Ascending aorta (tissue), 2 donors: ENCODE measurements at regions of chr4 and their contacts with region 1.

Region 1: DNA sequence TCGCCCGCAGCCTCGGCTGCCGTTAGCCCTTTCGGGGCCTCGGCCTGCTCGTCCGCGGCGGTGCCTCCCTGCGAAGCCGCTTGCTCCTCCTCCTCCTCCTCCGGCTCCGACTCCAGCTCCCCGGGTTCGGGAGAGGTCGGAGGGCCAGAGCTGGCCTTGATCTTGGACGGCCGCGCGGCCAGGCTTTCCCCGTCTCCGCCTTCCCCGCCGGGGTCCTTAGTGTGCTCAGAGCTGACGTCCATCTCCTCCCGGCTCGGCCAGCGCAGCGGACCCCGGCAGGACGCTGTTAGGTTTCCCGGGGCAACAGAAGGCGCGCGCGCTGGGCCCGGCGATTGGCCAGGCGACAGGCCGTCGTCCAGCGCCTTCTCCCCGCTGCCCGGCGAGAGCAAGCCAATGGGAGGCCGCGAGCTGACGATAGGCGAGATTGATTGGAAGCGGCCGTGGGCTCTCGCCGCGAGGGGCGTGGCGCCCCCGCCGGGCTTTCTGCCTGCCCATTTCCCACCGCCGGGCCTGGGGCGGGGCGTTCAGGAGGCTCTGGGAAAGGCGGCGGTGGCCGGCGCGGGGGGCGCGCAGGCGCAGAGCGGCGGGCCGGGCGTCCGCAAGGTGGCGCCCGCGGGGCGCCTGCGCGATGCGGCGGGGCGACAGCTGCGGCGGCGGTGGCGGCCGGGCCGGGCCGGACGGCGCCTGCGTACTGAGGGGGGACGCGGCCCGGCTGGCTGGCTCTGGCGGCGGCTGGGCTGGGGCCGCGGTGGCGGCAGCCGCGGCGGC is at the start of gene TADA2B:
- DNase-seq: peak; percentile 91 to 99
- H3K4me3 ChIP-seq: peak within 1 kb of the TSS; percentile 99 to 100
- H3K27ac ChIP-seq: peak within 1 kb of the TSS; percentile 90 to 92
- H3K4me1 ChIP-seq: peaks cover 27% of the 10 kb centered on the region in 2 donors
- H3K27me3 ChIP-seq: no peaks in the 10 kb centered on the region
- CTCF ChIP-seq: peak in 2 of 3 experiments; percentile 5 to 85
- total RNA-seq, gene TADA2B: 37.3 TPM

Region 2: GRCh38 chr4:6574747-6575502 is 468.0 kb before region 1 on chr4 and contains the start of gene MAN2B2:
- intact Hi-C with region 1: loop called (anchors 10 kb)
- DNase-seq: peak; percentile 24 to 94
- H3K4me3 ChIP-seq: peak within 1 kb of the TSS; percentile 75 to 93
- H3K27ac ChIP-seq: peak within 1 kb of the TSS; percentile 68 to 69
- H3K4me1 ChIP-seq: peaks cover 7 to 13% of the 10 kb centered on the region in 2 donors
- H3K27me3 ChIP-seq: no peaks in the 10 kb centered on the region
- CTCF ChIP-seq: no peak
- total RNA-seq, gene MAN2B2: 47.8 TPM

Region 3: DNA sequence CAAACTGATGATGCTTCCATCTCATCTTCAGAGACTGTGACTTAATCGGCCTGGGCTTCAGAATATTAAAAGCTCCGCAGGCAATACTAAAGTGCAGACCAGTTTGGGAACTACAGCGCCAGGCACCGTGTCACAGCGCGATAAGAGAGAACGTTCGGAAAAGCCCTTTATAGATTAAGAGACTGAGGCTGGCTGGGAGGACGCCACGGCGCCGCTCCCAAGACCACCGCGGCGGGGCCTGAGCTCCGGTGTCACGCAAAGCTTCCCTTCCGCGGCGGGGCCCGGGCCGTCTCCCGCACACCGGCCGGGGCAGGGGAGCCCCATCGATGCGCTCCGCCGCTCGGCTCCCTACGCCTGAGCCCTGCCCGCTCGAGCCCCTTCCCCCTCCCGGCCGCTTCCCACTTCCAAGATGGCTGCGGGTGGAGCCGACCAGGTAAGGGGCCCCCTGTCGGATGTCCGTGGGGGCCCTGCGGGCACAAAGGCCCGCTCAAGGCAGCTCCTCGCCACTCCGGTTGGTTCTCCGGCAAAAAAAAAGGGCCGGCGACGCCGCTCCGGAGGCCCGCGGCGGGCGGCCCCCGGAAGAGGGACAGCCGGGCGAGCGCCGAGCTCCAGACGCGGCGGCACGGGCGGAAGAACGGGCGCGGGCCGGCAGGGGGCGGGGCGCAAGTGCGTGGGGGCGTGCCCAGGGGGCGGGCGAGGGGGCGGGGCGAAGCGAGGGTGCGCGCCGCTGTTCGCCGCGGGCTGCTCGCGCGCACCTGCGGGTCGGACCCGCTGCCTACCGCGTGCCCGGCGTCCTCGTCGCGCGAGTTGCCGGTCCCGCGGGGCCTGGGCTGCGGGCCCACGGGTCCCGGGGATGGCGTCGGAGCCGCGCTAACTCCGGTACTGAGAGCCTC is 133.6 kb before region 1 on chr4 and contains the start of gene TBC1D14:
- intact Hi-C with region 1: loop called (anchors 2 kb)
- DNase-seq: peak; percentile 54 to 93
- H3K4me3 ChIP-seq: peak within 1 kb of the TSS; percentile 84 to 94
- H3K27ac ChIP-seq: peak within 1 kb of the TSS; percentile 97 to 99
- H3K4me1 ChIP-seq: peaks cover 0 to 32% of the 10 kb centered on the region in 2 donors
- H3K27me3 ChIP-seq: no peaks in the 10 kb centered on the region
- CTCF ChIP-seq: peak in 1 of 3 experiments; percentile 4
- total RNA-seq, gene TBC1D14: 26.4 TPM

Region 4: DNA sequence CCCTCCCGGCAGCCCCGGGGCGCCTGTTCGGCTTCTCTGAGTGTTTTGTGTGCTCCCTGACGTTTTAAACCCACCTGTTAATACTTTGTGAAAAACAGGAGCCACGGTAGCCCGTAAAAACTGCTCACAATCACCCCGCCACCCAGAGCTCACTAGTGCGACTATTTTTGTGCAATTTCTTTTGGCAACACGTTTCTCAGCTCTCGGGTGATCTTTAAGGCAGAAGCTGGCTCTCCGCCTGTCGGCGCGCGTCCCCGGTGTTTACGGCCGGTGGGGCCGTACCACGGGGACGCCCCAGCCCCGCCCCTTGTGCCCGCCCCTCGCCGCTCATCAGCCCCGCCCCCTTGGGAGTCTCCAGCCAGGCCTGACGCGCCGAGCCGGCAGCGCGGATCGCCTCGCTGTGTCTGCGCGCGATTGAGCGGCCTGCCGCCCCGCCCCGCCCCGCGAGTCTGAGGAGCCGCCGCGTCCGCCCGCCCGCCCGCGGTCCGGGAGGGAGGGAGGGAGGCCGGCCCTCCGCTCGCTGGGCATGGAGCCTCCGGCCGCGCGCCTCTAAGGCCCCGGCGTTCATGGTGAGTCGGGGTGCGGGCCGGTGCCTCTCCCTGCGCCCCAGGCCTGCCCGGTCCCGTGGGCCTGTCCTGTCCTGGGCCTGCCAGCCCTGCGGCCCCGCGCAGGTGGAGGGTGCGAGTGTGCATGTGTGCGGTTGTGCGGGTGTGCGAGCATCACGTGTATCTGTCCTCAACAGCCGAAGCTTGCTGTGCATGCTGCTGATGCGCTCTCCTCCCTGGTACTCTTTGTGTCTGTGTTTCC is 55.9 kb before region 1 on chr4:
- intact Hi-C with region 1: loop called (anchors 1 kb)
- DNase-seq: peak; percentile 75 to 96
- H3K4me3 ChIP-seq: peak overlapping the region; percentile 65 to 83
- H3K27ac ChIP-seq: peak overlapping the region; percentile 92
- H3K4me1 ChIP-seq: peaks cover 9 to 31% of the 10 kb centered on the region in 2 donors
- H3K27me3 ChIP-seq: no peaks in the 10 kb centered on the region
- CTCF ChIP-seq: no peak

Region 5: GRCh38 chr4:7101692-7102515 is 59.0 kb after region 1 on chr4:
- intact Hi-C with region 1: loop called (anchors 2 kb)
- DNase-seq: peak in 1 of 2 donors; percentile 83
- H3K4me3 ChIP-seq: peak overlapping the region; percentile 57 to 70
- H3K27ac ChIP-seq: peak overlapping the region; percentile 83 to 84
- H3K4me1 ChIP-seq: peaks cover 5 to 20% of the 10 kb centered on the region in 2 donors
- H3K27me3 ChIP-seq: no peaks in the 10 kb centered on the region
- CTCF ChIP-seq: peak; percentile 41 to 72 (median 69)

Region 6: DNA sequence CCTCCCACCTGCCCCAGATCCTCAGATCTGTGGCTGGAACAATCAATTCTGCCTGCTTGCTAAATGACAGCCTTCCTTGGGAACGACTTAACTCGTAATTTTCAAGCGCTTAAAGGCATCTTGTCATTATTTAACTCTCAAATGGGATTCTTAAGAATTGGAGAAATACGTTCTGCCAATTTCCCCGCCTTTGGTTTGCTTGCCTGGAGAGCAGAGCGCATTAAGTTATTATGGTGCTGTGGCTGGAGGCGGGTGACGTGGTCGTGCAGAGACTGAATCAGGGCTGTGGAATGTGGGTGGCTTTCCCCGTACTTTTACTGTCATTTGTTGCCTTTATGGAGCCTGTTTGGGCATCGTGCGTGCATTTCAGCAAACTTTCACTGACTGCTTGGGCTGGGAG is 470.8 kb after region 1 on chr4:
- intact Hi-C with region 1: no loop called
- DNase-seq: no peak
- H3K4me3 ChIP-seq: no peak overlapping the region
- H3K27ac ChIP-seq: no peak overlapping the region
- H3K4me1 ChIP-seq: no peaks in the 10 kb centered on the region
- H3K27me3 ChIP-seq: no peaks in the 10 kb centered on the region
- CTCF ChIP-seq: no peak